Thyroid gland (tissue), 4 donors: ENCODE measurements at regions of chr9 and their contacts with region 1.

Region 1: DNA sequence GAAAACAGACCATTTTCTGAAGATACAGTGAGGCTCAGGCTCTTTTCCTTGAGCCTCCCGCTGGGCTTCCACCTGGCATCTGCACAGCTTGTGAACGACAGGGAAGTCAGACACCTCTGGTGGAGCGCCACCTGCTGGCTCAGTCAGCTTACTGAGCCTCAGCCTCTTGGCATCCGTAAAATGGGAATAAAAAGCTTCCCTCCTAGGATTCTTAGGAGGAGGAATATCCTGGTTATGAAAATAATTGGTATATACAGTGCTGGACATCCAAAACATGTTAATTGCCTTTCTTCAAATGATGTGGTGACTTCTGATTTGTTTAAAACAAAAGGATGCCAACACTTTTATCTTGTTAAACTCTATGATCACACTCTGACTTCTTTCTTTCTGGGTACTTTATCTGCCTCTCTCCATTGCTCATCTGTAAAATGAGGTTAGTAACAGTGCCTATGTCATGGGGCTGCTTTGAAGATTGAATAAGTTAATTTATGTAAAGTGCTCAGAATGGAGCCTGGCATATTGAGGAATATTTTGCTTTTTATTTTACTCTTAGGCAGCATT is 67.5 kb downstream of the MAMDC2 start:
- DNase-seq: peak; percentile 83 to 88
- H3K4me3 ChIP-seq: no peak overlapping the region
- H3K27ac ChIP-seq: no peak overlapping the region
- H3K4me1 ChIP-seq: peaks cover 0 to 10% of the 10 kb centered on the region in 2 donors
- H3K27me3 ChIP-seq: no peaks in the 10 kb centered on the region
- CTCF ChIP-seq: peak; percentile 46 to 86 (median 77)
- POLR2A ChIP-seq: no peak

Region 2: GRCh38 chr9:69971643-69972449 is 139.3 kb before region 1 on chr9:
- intact Hi-C with region 1: loop called (anchors 2 kb)
- DNase-seq: peak; percentile 77 to 81
- H3K4me3 ChIP-seq: no peak overlapping the region
- H3K27ac ChIP-seq: no peak overlapping the region
- H3K4me1 ChIP-seq: no peaks in the 10 kb centered on the region
- H3K27me3 ChIP-seq: no peaks in the 10 kb centered on the region
- CTCF ChIP-seq: peak; percentile 69 to 93 (median 80)
- POLR2A ChIP-seq: no peak

Region 3: GRCh38 chr9:70060883-70061507 is 50.1 kb before region 1 on chr9:
- intact Hi-C with region 1: no loop called
- DNase-seq: no peak
- H3K4me3 ChIP-seq: no peak overlapping the region
- H3K27ac ChIP-seq: no peak overlapping the region
- H3K4me1 ChIP-seq: no peaks in the 10 kb centered on the region
- H3K27me3 ChIP-seq: no peaks in the 10 kb centered on the region
- CTCF ChIP-seq: no peak
- POLR2A ChIP-seq: no peak

Region 4: DNA sequence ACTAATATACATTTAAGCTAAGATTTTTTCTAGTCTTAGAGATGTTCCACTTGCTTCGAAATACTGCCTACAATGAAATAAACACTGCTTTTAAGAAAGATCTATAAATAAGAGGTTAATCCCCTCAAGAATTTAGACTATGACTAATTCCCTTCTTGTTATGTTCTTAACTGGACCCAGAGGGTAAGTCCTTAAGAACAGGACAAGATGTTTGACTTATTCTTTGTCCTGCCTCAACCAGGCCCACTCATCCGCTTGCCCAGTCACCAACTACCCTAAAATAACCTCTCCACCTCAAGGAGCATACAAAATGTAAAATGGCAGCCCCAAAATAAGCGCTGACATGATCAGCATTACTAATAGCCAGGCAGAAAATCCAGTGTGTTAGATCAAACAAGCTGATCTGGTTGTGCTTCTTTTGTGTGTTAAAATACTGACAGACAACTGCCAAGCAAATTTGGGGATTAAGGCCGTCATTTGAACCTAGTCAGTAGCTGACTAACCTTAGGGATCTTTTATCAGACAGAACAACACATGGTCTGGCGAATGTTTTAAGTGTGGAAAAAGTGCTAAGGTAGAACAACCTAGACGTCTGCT is 54.0 kb after region 1 on chr9:
- intact Hi-C with region 1: no loop called
- DNase-seq: peak in 1 of 2 donors; percentile 8
- H3K4me3 ChIP-seq: no peak overlapping the region
- H3K27ac ChIP-seq: no peak overlapping the region
- H3K4me1 ChIP-seq: peaks cover 0 to 5% of the 10 kb centered on the region in 2 donors
- H3K27me3 ChIP-seq: no peaks in the 10 kb centered on the region
- CTCF ChIP-seq: no peak
- POLR2A ChIP-seq: no peak

Region 5: GRCh38 chr9:70232476-70232875 is 121.4 kb after region 1 on chr9:
- intact Hi-C with region 1: loop called (anchors 10 kb)
- DNase-seq: peak; percentile 69 to 76
- H3K4me3 ChIP-seq: no peak overlapping the region
- H3K27ac ChIP-seq: peak overlapping the region in 1 of 3 donors; percentile 30
- H3K4me1 ChIP-seq: peaks cover 20 to 25% of the 10 kb centered on the region in 2 donors
- H3K27me3 ChIP-seq: no peaks in the 10 kb centered on the region
- CTCF ChIP-seq: peak in 2 of 6 experiments; percentile 10 to 15
- POLR2A ChIP-seq: no peak